ENCODE measurements at regions of chr11 and their contacts with region 1.

Region 1: DNA sequence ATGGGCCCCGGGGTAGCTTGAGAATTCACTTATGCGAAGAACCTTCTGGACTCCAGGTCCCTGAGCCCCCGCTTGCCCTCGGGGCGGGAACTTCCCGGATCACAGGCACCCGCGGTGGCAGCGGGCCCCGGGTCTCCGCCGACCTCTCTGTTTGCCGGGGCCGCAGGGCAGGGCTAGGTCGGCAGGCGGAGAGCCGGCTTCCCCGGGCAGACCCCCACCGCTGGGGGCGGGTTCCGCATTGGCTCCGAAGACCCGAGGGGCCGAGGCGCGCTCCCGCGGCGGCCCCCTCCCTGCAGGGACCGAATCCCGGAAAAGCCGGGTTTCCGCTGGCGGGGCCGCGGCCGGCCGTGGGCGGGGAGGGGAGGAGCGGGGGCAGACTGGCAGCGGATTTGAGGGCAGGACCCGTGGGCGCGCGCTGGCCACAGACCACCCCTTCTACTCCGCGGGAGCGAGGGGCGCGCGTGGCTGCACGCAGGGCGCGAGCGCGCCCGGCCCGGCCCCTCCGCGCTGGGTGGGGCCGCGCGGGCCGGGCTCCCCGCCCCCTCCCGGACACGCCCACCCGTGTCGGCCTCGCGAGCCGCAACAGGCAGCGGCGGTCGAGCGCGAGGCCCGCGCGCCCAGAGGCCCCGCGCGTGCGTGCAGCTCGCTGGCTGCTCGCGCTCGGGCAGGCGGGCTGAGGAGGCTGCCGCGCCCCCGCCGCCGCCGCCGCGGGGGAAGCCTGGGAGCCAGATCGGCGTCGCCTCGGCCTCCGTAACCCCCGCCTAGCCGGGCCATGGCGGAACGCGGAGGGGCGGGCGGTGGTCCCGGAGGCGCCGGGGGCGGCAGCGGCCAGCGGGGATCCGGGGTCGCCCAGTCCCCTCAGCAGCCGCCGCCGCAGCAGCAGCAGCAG is at the start of gene PACS1:
- DNase-seq: peak in 9 of 10 donors; percentile 45 to 82 (median 63)
- H3K4me3 ChIP-seq: peak within 1 kb of the TSS; percentile 65 to 96 (median 80)
- H3K27ac ChIP-seq: peak within 1 kb of the TSS; percentile 64 to 99 (median 95)
- H3K27me3 ChIP-seq: no peaks in the 10 kb centered on the region
- CTCF ChIP-seq: peak in 7 of 56 donors; percentile 2 to 17 (median 11)
- total RNA-seq, gene PACS1: 58.1 to 131 (median 95.3) TPM

Region 2: DNA sequence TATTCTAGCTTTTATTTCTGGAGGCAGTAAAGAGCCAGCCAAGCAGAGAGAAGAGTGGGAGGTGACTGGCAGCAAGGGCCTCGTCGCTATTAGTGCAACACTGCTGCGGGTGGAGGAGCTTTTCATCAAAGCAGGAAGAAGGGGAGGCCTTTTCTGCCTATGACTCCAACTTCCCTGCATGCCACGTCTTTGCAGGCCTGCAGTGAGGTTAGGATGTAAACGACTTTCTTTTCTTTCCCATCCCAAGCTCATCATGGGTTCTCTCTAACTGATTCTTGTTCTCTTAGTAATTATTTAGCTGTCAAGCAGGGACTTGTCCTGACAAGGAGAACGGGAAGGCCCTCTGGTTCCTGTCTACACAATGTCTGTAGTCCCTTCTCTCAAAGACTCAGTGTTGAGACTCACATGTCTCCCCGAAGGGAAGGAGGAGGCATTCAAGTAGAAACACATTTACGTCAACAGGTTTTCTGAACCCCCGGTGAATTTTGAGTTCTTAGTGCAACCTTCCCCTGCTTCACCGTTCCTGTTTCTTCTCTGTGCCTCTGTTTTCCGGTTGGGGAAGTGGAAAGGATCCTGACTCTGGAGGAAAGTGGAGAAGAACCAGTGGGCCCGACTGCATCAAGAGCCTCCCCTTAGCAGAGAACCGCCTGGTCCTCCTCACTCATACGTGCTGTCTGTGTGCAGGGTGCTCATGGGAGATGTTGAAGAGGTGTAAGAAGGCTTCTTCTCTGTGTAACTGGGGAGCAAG is 57.0 kb after region 1 on chr11:
- intact Hi-C with region 1: loop called in 1 of 2 experiments (anchors 10 kb)
- DNase-seq: peak in 9 of 10 donors; percentile 39 to 63 (median 51)
- H3K4me3 ChIP-seq: peak overlapping the region in 13 of 59 donors; percentile 0 to 39 (median 16)
- H3K27ac ChIP-seq: peak overlapping the region in 58 of 59 donors; percentile 23 to 92 (median 78)
- H3K27me3 ChIP-seq: no peaks in the 10 kb centered on the region
- CTCF ChIP-seq: peak in 4 of 56 donors; percentile 7 to 29 (median 20)

Region 3: DNA sequence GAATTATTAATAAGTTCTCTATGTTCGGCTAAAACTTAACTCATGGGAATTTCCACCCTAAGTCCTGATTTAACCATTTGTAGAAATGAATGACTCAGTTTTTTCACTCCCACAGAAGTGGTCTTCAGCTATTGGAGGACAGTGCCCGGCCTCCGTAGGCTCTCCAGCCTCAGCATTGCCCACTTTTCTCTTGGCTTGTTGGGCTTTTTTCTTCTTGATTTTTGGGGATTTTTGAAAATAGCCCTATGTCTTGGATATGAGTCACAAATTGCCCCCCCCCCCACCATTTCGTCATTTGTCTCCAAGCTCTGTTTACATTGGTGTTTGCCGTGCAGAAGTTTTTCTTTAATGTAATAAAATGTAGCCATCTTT is 66.8 kb after region 1 on chr11:
- intact Hi-C with region 1: loop called in 1 of 2 experiments (anchors 2 kb)
- DNase-seq: no peak
- H3K4me3 ChIP-seq: no peak overlapping the region
- H3K27ac ChIP-seq: no peak overlapping the region
- H3K27me3 ChIP-seq: no peaks in the 10 kb centered on the region
- CTCF ChIP-seq: no peak

Region 4: GRCh38 chr11:66258473-66258893 is 188.5 kb after region 1 on chr11:
- intact Hi-C with region 1: loop called in 1 of 2 experiments (anchors 2 kb)
- DNase-seq: no peak
- H3K4me3 ChIP-seq: peak overlapping the region; percentile 64 to 98 (median 94)
- H3K27ac ChIP-seq: peak overlapping the region in 58 of 59 donors; percentile 20 to 95 (median 90)
- H3K27me3 ChIP-seq: no peaks in the 10 kb centered on the region
- CTCF ChIP-seq: peak in 17 of 56 donors; percentile 1 to 40 (median 13)

Measured in dorsolateral prefrontal cortex (tissue), 120 donors.